ENCODE measurements at regions of chr9 and their contacts with region 1.

Region 1: GRCh38 chr9:107749787-107750444 is 260.3 kb upstream of the KLF4 start:
- DNase-seq: peak; percentile 68 to 76
- H3K4me3 ChIP-seq: no peak overlapping the region
- H3K27ac ChIP-seq: peak overlapping the region; percentile 61 to 86 (median 83)
- H3K4me1 ChIP-seq: peaks cover 27 to 44% of the 10 kb centered on the region in 2 donors
- H3K27me3 ChIP-seq: no peaks in the 10 kb centered on the region
- CTCF ChIP-seq: no peak
- POLR2A ChIP-seq: no peak

Region 2: GRCh38 chr9:107489687-107490605 is 260.0 kb before region 1 on chr9 and contains the start of gene KLF4:
- intact Hi-C with region 1: loop called (anchors 10 kb)
- DNase-seq: peak; percentile 89 to 90
- H3K4me3 ChIP-seq: peak within 1 kb of the TSS; percentile 0 to 67 (median 53)
- H3K27ac ChIP-seq: peak within 1 kb of the TSS; percentile 88 to 91 (median 90)
- H3K4me1 ChIP-seq: peaks cover 10 to 18% of the 10 kb centered on the region in 2 donors
- H3K27me3 ChIP-seq: no peaks in the 10 kb centered on the region
- CTCF ChIP-seq: no peak
- POLR2A ChIP-seq: peak in 1 of 2 donors; percentile 84
- total RNA-seq, gene KLF4: 24.9 to 56.6 (median 30.3) TPM

Region 3: DNA sequence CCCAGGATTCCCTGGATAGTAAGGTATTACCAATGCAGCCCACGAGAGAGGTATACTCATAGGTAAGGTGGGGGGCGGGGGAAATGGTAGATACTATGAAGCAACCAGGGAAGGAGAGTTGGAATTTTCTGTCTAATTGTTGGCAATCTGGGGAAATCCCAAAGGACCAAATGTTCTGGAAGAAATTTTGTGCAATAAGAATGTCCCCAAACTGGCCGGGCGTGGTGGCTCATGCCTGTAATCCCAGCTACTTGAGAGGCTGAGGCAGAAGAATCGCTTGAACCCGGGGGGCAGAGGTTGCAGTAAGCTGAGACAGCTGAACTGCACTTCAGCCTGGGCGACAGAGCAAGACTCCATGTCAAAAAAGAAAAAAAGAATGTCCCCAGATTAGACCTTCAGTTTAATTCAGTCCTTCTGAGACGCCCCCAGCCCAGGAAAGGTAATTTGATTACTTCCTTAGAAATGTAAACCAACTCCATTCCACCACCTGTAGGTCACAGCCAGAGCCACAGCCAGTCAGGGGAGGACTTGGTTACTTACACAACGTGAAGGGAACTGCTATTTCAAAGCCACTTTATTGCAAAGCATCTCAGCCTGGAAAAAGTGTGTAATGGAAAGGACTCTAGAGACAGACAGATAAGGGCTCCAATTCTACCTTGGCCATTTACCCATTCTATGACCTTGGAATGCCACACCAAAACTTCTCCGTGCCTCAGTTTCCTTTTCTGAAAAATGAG is 210.3 kb before region 1 on chr9:
- intact Hi-C with region 1: no loop called
- DNase-seq: no peak
- H3K4me3 ChIP-seq: no peak overlapping the region
- H3K27ac ChIP-seq: no peak overlapping the region
- H3K4me1 ChIP-seq: no peaks in the 10 kb centered on the region
- H3K27me3 ChIP-seq: no peaks in the 10 kb centered on the region
- CTCF ChIP-seq: no peak
- POLR2A ChIP-seq: no peak

Region 4: GRCh38 chr9:108751369-108751768 is 1001.5 kb after region 1 on chr9:
- intact Hi-C with region 1: loop called (anchors 5 kb)
- DNase-seq: no peak
- H3K4me3 ChIP-seq: no peak overlapping the region
- H3K27ac ChIP-seq: no peak overlapping the region
- H3K4me1 ChIP-seq: no peaks in the 10 kb centered on the region
- H3K27me3 ChIP-seq: no peaks in the 10 kb centered on the region
- CTCF ChIP-seq: no peak
- POLR2A ChIP-seq: no peak

Measured in thyroid gland (tissue), 4 donors.